CD4-positive, alpha-beta T cell (primary cell): ENCODE measurements at regions of chr12 and their contacts with region 1.

Region 1: DNA sequence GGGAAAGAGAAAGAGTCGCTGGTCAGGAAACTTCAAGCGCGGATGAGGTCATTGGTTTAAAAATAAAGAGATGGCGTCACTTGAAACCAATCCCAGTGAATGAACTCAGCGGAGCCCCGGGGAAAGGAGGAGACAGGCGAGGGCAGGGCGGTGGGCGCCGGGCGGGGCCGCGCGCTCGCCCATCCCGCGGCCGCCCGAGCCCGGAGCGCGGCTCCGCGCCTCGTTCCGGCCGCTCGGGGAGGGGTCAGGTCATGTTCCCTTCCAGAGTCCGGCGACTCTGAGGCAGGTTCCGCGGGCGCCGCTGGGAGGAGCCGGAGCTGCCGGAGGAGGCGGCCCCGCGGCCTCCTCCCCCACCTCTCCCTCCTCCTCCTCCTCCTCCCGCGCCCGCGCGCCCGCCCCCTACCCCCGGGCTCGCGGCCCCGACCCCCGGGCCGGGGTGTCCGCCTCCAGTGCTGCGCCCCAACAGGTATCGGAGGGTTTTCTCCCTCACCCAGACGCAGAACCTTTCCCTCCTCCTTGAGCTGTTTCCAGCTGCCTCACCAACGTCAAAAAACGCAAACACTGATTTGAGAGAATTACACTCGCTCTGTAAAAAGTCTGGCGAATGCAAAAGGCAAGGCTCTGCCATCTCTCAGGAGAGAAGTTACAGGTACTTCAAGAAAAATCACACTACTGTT is at the start of gene DUSP16:
- DNase-seq: peak; percentile 52 to 95 (median 69)
- ATAC-seq: peak; percentile 62
- H3K4me3 ChIP-seq: peak within 1 kb of the TSS; percentile 88
- H3K4me3 Mint-ChIP-seq: peak within 1 kb of the TSS; percentile 99
- H3K27ac ChIP-seq: peak within 1 kb of the TSS; percentile 95 to 98
- H3K27ac Mint-ChIP-seq: peak within 1 kb of the TSS; percentile 99
- H3K4me1 ChIP-seq: peaks cover 19% of the 10 kb centered on the region
- H3K4me1 Mint-ChIP-seq: peaks cover 52% of the 10 kb centered on the region
- H3K27me3 ChIP-seq: no peaks in the 10 kb centered on the region
- H3K27me3 Mint-ChIP-seq: no peaks in the 10 kb centered on the region
- CTCF ChIP-seq: no peak
- total RNA-seq, gene DUSP16: 33.3 to 35.6 TPM

Region 2: GRCh38 chr12:12338527-12339168 is 224.1 kb before region 1 on chr12:
- CTCF ChIA-PET with region 1: no interaction called
- POLR2A ChIA-PET with region 1: no interaction called
- intact Hi-C with region 1: no loop called
- DNase-seq: no peak
- ATAC-seq: no peak
- H3K4me3 ChIP-seq: no peak overlapping the region
- H3K4me3 Mint-ChIP-seq: no peak overlapping the region
- H3K27ac ChIP-seq: no peak overlapping the region
- H3K27ac Mint-ChIP-seq: no peak overlapping the region
- H3K4me1 ChIP-seq: peaks cover 12% of the 10 kb centered on the region
- H3K4me1 Mint-ChIP-seq: peaks cover 24% of the 10 kb centered on the region
- H3K27me3 ChIP-seq: no peaks in the 10 kb centered on the region
- H3K27me3 Mint-ChIP-seq: no peaks in the 10 kb centered on the region
- CTCF ChIP-seq: no peak

Region 3: DNA sequence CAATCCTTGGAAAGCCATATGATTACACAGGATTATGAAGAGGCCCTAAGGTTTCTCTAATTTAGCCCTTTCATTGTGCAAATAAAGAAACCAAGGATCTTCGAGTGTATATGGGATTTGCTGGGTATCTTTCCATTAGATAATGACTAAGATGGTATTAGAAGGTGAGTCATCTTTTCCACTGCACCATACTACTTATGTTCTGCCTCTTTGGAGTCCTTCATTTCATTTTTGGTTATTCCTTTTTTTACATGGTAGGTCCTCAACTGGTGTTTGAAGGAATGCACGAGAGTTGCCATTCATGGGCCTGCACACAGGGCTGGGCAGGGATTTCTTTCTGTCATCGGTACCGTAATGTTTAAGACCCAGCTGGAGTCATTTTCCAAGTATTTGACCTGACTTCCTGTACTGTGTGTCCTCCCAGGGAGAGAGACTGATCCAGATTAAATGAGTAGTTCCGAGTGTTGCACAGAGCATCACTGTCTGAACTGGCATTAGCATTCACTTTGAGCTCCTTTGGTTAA is 120.1 kb before region 1 on chr12:
- CTCF ChIA-PET with region 1: no interaction called
- POLR2A ChIA-PET with region 1: interaction called, 13 read pairs
- intact Hi-C with region 1: loop called in 1 of 2 experiments (anchors 1 kb)
- DNase-seq: peak in 3 of 14 experiments; percentile 47 to 52 (median 52)
- ATAC-seq: peak; percentile 1
- H3K4me3 ChIP-seq: no peak overlapping the region
- H3K4me3 Mint-ChIP-seq: peak overlapping the region; percentile 45
- H3K27ac ChIP-seq: peak overlapping the region; percentile 83
- H3K27ac Mint-ChIP-seq: peak overlapping the region; percentile 95
- H3K4me1 ChIP-seq: peaks cover 74% of the 10 kb centered on the region
- H3K4me1 Mint-ChIP-seq: peaks cover 81% of the 10 kb centered on the region
- H3K27me3 ChIP-seq: no peaks in the 10 kb centered on the region
- H3K27me3 Mint-ChIP-seq: no peaks in the 10 kb centered on the region
- CTCF ChIP-seq: no peak

Region 4: GRCh38 chr12:12486661-12487240 is 76.0 kb before region 1 on chr12:
- CTCF ChIA-PET with region 1: no interaction called
- POLR2A ChIA-PET with region 1: interaction called, 58 read pairs
- intact Hi-C with region 1: loop called (anchors 1 to 5 kb)
- DNase-seq: no peak
- ATAC-seq: no peak
- H3K4me3 ChIP-seq: no peak overlapping the region
- H3K4me3 Mint-ChIP-seq: no peak overlapping the region
- H3K27ac ChIP-seq: peak overlapping the region in 1 of 2 donors; percentile 56
- H3K27ac Mint-ChIP-seq: peak overlapping the region; percentile 73
- H3K4me1 ChIP-seq: peaks cover 37% of the 10 kb centered on the region
- H3K4me1 Mint-ChIP-seq: peaks cover 51% of the 10 kb centered on the region
- H3K27me3 ChIP-seq: no peaks in the 10 kb centered on the region
- H3K27me3 Mint-ChIP-seq: no peaks in the 10 kb centered on the region
- CTCF ChIP-seq: no peak

Region 5: GRCh38 chr12:12611512-12612306 is 49.0 kb after region 1 on chr12 and contains the start of gene CREBL2:
- CTCF ChIA-PET with region 1: interaction called, 4 read pairs
- POLR2A ChIA-PET with region 1: interaction called, 16 read pairs
- intact Hi-C with region 1: loop called (anchors 2 kb)
- DNase-seq: peak; percentile 76 to 94 (median 83)
- ATAC-seq: peak; percentile 90
- H3K4me3 ChIP-seq: peak within 1 kb of the TSS; percentile 80
- H3K4me3 Mint-ChIP-seq: peak within 1 kb of the TSS; percentile 91
- H3K27ac ChIP-seq: peak within 1 kb of the TSS; percentile 92 to 97
- H3K27ac Mint-ChIP-seq: peak within 1 kb of the TSS; percentile 98
- H3K4me1 ChIP-seq: peaks cover 49% of the 10 kb centered on the region
- H3K4me1 Mint-ChIP-seq: peaks cover 71% of the 10 kb centered on the region
- H3K27me3 ChIP-seq: no peaks in the 10 kb centered on the region
- H3K27me3 Mint-ChIP-seq: no peaks in the 10 kb centered on the region
- CTCF ChIP-seq: no peak
- total RNA-seq, gene CREBL2: 9.5 to 12.6 TPM

Region 6: GRCh38 chr12:12661086-12661485 is 98.4 kb after region 1 on chr12:
- CTCF ChIA-PET with region 1: interaction called, 5 read pairs
- POLR2A ChIA-PET with region 1: interaction called, 4 read pairs
- intact Hi-C with region 1: loop called (anchors 2 to 5 kb)
- DNase-seq: no peak
- ATAC-seq: no peak
- H3K4me3 ChIP-seq: no peak overlapping the region
- H3K4me3 Mint-ChIP-seq: no peak overlapping the region
- H3K27ac ChIP-seq: no peak overlapping the region
- H3K27ac Mint-ChIP-seq: no peak overlapping the region
- H3K4me1 ChIP-seq: peaks cover 2% of the 10 kb centered on the region
- H3K4me1 Mint-ChIP-seq: peaks cover under 1% of the 10 kb centered on the region
- H3K27me3 ChIP-seq: no peaks in the 10 kb centered on the region
- H3K27me3 Mint-ChIP-seq: no peaks in the 10 kb centered on the region
- CTCF ChIP-seq: no peak

Region 7: DNA sequence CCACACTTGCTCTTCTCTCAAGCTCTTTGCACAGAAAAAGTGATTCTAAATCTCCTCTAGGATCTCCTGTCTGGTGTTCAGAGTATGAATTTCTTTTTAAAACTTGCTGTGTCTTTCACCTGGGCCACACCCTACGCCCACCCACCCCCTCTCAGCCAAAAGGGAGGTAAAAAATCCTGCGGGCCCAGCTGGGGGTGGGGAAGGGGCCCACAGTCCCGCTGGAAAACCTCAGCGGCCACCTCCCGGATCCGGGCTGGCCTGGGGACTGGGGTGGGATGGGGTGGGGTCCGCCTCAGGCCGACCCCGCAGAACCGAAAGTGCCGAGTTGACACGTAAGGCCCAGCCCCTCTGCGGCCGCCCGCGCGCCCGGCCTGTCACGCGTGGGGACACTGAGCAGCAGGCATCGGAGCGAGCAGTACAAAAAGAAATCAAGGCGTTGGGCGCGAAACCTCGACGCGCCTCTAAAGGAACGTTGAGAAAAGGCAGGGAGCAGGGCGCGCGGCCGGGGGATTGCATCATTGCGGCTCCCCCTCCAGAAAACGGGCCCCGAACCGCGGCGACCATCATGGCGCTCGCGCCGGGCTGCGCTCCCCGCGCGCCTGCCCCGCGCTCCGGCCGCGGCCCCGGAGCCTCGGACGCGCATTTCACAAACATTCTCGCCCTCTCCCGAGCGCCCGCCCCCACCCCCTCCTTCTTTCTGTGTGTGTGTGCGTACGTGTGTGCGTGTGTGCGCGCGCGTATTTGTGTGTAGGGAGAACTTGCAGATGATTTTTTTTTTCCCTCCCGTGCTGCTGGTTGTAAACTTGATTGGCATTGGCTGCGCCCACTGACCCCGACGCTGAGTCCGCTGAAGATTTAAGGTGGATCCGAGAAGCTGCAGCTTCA is 162.2 kb after region 1 on chr12:
- CTCF ChIA-PET with region 1: no interaction called
- POLR2A ChIA-PET with region 1: interaction called, 23 read pairs
- intact Hi-C with region 1: loop called in 1 of 2 experiments (anchors 1 kb)
- DNase-seq: peak in 11 of 14 experiments; percentile 72 to 98 (median 84)
- ATAC-seq: peak; percentile 56
- H3K4me3 ChIP-seq: peak overlapping the region; percentile 97
- H3K4me3 Mint-ChIP-seq: peak overlapping the region; percentile 98
- H3K27ac ChIP-seq: peak overlapping the region; percentile 89 to 91
- H3K27ac Mint-ChIP-seq: peak overlapping the region; percentile 95
- H3K4me1 ChIP-seq: peaks cover 37% of the 10 kb centered on the region
- H3K4me1 Mint-ChIP-seq: peaks cover 63% of the 10 kb centered on the region
- H3K27me3 ChIP-seq: no peaks in the 10 kb centered on the region
- H3K27me3 Mint-ChIP-seq: peaks cover 8% of the 10 kb centered on the region
- CTCF ChIP-seq: no peak